Right ventricle myocardium superior (tissue), 1 donor: ENCODE measurements at regions of chr13 and their contacts with region 1.

Region 1: DNA sequence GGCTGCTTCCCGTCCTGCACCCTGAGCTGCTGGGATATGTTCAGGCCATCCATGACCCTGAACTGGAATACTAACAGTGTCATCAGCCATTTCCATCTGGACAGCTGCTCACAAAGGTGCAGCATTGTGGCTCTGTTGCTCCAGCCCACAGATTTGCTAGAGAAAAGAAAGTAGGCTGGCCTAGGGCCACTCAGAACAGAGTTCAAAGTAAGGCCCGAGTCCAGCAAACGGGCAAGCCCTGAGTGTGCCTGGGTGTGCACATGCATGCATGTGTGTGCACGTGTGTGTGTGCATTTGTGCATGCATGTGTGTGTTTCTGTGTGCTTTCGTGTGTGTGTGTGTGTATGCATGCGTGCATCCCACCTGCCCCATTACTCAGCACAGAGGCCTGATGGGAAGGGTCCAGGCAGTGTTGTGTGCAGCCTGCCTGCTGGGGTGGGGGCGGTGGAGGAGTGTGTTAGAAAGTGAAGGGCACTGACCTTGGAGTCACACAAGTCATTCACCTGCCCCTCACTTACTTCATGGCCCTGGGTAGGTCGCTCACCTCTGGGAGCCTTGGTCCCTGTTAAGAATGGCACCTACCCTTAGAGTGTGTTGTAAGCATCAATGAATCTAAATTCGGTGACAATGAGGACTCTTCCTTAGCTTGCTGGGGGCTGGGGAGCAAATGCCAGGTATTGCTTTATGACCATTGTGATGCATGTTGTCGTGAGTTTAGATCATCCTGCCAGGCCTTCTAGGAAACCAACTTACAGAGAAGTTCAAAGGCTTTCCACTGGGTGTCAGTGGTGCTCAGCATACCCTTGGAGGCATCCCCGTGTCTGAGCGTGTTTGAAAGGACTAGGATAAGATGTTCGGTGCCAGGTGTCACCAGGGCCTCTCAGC is 53.2 kb downstream of the GPR12 start:
- DNase-seq: no peak
- ATAC-seq: peak; percentile 76

Region 2: GRCh38 chr13:26601669-26602068 is 105.7 kb before region 1 on chr13:
- intact Hi-C with region 1: no loop called
- DNase-seq: no peak
- ATAC-seq: no peak

Region 3: DNA sequence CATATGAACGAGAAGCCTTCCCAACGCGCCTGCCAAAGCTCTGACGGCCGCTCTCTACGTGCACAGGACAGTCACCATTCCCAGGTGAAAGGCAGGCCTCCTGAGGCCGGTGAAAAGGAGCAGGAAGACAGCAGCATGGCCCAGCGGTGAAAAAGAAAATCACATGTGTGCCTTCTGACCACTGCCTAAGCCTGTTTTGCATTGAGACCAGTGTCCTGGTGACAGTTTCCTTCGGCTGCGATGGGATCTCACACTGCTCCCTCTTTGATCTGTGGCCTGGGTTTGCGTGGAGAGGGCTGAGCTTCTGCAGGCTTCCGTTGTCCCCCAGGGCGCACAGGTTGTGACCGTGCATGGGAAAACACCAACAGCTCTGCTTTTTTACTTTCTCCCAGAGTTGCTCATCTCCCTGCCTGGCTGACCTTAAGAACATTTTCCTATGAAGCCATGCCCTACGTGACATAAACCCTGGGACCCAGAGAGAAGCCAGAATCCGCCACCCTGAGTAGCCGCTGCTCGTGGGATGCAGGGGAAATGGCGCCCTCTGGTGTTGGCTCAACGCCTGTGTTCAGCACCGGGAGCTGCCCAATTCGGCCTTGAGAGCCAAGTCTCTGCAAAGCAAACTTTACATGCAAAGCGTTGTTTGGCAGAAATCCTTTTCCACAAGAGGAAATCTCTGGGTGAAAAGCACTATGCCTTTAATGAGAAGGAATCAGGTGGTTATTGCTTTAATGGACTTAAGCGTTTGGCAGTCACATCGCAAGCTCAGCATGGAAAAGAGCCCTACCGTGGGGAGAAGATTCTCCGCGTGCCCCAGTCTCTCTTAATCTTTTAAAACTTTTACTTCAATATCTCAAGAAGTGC is 165.4 kb after region 1 on chr13:
- intact Hi-C with region 1: loop called (anchors 2 kb)
- DNase-seq: peak; percentile 60
- ATAC-seq: peak; percentile 73

Region 4: GRCh38 chr13:26929971-26930730 is 222.8 kb after region 1 on chr13:
- intact Hi-C with region 1: loop called (anchors 2 kb)
- DNase-seq: peak; percentile 74
- ATAC-seq: peak; percentile 82